Head of caudate nucleus (tissue), 42 donors: ENCODE measurements at regions of chr12 and their contacts with region 1.

Region 1: GRCh38 chr12:50167041-50167828 is at the start of gene CERS5:
- DNase-seq: peak; percentile 87 to 98 (median 97)

Region 2: GRCh38 chr12:50111693-50112455 is 55.4 kb before region 1 on chr12 and contains the start of gene COX14:
- intact Hi-C with region 1: loop called (anchors 1 kb)
- DNase-seq: peak; percentile 98 to 100 (median 99)

Region 3: DNA sequence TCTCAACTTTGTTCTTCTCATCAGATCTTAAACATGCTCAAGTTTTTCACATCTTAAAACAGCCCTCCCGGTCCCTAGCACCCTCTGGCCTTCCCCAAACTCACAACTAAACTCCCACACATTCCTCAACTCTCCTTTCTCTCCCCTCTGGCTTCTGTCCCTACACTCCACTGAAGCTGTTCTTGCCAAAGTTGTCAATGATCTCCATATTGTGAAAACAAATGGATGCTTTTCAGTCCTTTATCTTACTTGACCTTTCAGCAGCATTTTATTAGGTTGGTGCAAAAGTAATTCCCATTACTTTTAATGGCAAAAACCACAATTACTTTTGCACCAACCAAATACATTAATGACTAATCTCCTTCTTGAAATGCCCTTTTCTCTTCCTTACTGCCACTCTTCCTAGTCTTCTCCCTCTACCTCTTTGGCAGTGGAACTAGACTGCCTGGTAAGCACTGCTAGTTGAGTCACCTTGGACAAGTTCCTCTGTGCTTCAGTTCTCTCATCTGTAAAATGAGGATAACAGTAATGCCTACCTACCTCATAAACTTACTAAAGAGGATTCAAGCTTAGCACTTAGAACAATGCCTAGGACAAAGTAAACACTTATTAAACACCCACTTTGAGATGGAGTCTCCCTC is 16.1 kb before region 1 on chr12:
- intact Hi-C with region 1: no loop called
- DNase-seq: no peak